ENCODE measurements at regions of chr22 and their contacts with region 1.

Region 1: DNA sequence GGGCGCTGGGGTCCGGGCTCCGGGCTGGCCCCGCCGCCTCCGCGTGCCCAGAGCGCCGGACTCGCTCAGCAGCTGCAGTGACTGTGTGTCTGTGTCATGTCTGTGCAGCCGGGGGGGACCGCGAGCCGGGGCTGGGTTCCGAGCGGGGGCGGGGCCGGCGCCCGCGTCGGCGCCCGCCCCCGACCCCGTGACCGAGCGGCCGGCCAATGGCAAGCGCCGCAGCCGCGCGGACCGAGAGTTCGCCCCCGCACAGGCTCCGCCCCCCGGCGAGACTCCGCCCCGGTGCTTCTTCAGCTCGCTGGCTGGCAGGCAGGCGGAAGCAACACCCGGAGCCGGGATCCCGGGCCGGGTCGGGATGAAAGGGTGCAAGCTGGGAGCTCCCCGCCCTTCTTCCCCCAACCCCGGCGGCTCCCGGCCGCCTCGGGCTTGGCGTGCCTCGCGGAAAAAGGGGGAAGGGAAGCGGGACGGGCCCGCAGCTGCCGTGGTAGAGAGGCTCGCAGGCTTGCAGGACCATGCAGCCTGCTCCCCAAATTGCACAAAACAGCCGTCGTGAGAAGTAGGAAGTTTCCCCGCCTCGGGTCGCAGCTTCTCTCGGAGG is 750 bp upstream of the LARGE1 start:
- DNase-seq: peak; percentile 59
- H3K4me3 ChIP-seq: peak overlapping the region; percentile 74
- CTCF ChIP-seq: no peak

Region 2: DNA sequence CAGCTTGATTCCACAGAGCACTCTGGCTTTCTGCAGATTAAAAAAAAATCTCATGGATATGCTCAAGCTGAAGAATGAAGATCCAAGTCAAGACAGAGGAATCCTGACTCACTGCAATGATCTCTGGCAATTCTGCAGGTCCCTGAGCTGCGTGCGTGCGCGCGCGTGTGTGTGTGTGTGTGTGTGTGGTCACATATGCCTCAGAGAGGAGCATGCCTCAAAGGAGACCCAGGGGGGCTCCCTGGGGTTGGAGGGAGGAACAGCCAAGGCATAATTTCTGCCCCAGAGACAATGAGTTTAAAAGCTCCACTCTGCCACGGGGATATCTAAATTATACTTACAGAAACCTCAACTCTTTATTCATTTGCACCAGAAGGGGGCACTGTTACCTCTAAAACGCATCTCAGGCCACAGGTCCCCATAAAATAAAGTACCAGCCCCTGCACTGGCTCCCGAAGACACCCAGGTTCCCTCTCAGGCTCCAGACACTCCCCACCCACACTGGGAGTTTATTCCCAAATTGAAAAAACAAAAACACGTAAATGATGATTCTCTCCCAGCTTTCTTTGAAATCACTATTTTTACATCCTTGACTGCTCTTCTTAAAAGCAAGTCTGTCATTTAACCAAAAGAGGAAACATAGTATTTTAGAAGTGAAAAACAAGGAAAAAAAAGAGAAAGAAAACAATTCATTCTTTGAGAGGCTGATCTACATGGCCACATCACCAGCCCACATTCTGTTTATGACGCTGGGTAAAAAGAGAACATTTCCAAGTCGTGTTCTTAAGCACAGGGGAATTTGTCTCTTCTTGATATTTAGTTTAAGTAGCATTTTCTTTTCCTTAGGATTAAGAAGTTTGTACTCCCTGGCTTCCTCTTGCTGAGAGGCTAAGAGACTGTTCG is 401.7 kb before region 1 on chr22:
- CTCF ChIA-PET with region 1: interaction called, 56 read pairs
- POLR2A ChIA-PET with region 1: interaction called, 3 read pairs
- DNase-seq: peak; percentile 51
- H3K4me3 ChIP-seq: no peak overlapping the region; the same call in 1 of the 2 replicates
- CTCF ChIP-seq: peak; percentile 36

Region 3: GRCh38 chr22:33932997-33933396 is 12.0 kb after region 1 on chr22:
- CTCF ChIA-PET with region 1: interaction called, 25 read pairs
- POLR2A ChIA-PET with region 1: no interaction called
- DNase-seq: no peak
- H3K4me3 ChIP-seq: no peak overlapping the region
- CTCF ChIP-seq: no peak

Region 4: DNA sequence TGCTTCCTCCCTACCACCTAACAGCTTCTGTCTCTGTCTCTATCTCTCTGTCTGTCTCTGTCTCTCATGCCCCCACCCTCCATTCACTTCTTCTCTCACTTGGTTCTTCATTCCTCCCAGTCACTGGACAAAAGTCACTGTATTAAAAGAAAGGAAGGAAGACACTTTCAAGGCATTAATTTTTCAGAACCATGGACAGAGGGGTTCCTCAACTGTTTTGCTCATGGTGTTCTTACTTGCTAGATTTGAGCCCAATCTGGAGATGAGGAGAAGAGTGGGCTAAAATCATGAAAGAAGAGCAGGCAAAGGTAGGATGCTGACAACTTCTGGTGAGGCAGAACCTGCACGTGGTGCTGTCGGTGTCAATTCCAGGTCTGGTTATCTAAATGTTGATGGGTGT is 115.9 kb after region 1 on chr22:
- CTCF ChIA-PET with region 1: no interaction called
- POLR2A ChIA-PET with region 1: no interaction called
- DNase-seq: no peak
- H3K4me3 ChIP-seq: no peak overlapping the region
- CTCF ChIP-seq: no peak

Region 5: GRCh38 chr22:34111210-34111824 is 190.3 kb after region 1 on chr22:
- CTCF ChIA-PET with region 1: interaction called, 13 read pairs
- POLR2A ChIA-PET with region 1: no interaction called
- DNase-seq: no peak
- H3K4me3 ChIP-seq: no peak overlapping the region
- CTCF ChIP-seq: peak; percentile 48

Region 6: DNA sequence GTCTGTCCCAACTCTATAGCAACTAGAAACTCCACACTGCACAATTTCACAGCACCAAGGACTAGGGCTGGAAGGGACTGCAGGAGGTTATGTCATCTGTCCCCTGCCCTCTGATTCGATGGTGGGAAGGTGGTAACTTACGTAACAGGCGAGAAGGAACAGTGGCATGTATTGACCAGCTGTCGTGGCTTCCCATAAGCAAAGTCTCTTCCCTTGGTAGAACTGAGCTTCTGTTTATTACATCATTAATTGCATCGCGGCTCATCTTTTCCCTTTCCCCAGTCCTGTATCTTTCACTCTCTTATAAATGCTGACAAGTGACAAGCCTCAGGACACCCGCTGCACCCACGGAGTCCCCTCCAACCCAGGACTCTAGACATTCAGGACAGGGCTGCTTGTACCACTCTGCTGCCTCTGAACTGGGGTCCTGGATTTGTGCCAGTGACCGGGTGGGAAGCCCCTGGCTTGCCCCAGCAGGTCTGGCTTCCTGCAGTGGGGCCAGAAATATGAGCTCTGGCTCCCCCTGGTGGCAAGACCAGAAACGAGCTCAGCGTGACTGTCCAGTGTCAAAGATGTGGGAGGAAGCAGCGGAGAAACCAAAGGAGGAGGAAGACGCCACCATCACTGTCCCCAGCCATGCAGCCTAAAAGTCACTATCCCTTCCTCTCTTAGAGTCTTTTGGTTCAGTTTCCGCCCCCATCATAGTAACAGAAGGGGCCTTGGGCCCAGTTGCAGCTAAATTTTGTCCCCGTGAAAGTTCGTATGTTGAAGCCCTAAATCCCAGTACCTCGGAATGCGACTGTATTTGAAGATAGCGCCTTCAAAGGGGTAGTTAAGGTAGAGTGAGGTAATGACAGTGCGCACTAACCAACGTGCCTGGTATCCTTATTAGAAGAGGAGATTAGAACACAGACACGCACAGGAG is 1229.4 kb after region 1 on chr22:
- CTCF ChIA-PET with region 1: interaction called, 24 read pairs
- POLR2A ChIA-PET with region 1: no interaction called
- DNase-seq: no peak
- H3K4me3 ChIP-seq: no peak overlapping the region
- CTCF ChIP-seq: peak; percentile 76

Region 7: DNA sequence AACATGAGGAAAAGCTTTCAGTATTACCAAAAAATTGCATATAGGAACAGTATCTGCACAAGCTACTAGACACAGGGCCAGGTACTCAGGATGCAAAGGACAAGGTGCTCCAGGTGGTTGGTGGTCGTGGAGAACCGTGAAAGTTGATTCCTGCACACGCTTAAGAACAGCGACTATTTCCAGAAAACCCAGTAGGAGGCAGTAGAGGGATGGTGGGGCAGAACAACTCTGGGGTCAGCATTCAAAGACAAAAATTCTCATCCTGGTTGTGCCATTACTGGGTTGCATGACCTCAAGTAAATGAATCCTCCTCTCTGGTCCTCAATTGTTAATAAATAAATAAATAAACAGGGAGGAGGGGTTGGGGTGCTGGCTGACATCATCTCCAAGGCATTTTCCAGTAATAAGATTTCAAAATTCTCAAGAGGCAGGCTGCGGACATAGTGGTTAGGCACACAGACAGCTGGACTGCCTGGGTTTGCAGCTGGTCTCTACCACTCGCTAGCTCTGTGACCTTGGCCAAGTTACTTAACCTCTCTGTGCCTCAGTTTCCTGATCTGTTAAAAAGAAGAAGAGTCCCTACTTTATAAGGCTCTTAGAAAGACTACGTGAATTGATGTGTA is 1234.5 kb after region 1 on chr22:
- CTCF ChIA-PET with region 1: interaction called, 24 read pairs
- POLR2A ChIA-PET with region 1: no interaction called
- DNase-seq: no peak
- H3K4me3 ChIP-seq: no peak overlapping the region
- CTCF ChIP-seq: no peak